AG04449 (cell line): ENCODE measurements at regions of chr14 and their contacts with region 1.

Region 1: DNA sequence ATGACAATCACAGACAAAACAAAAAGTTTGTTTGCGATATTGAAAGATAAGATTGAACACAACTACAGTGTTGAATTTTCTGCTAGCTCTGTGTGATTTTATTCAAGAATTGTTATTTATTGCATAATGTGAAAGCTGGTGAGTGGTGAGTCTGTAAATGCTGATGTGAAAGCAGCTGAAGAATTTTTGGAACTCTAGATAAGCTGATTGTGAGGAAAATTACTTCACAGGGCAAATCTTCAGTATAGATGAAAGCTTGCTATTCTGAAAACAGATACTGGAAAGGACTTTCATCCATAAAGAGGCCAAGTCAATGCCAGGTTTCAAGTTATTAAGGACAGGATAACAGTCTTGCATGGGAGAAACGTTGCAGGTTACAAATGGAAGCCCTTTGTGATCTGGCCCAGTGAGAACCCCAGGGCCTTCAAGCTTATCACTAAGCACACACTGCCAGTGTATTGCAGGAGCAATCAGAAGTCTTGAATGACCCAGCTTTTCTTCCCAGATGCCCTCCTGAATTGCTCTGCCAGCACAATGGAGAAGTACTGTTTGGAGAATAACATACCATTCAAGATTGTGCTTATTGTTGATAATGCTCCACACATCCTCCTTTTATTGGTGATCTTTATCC is 153.7 kb downstream of the PCNX1 start:
- DNase-seq: no peak
- H3K4me3 ChIP-seq: no peak overlapping the region
- CTCF ChIP-seq: no peak

Region 2: GRCh38 chr14:70972107-70972976 is 88.6 kb before region 1 on chr14:
- CTCF ChIA-PET with region 1: no interaction called
- POLR2A ChIA-PET with region 1: no interaction called
- DNase-seq: peak; percentile 62
- H3K4me3 ChIP-seq: no peak overlapping the region
- CTCF ChIP-seq: peak; percentile 71

Region 3: GRCh38 chr14:70995676-70996075 is 65.3 kb before region 1 on chr14:
- CTCF ChIA-PET with region 1: no interaction called
- POLR2A ChIA-PET with region 1: no interaction called
- DNase-seq: no peak
- H3K4me3 ChIP-seq: no peak overlapping the region
- CTCF ChIP-seq: no peak

Region 4: DNA sequence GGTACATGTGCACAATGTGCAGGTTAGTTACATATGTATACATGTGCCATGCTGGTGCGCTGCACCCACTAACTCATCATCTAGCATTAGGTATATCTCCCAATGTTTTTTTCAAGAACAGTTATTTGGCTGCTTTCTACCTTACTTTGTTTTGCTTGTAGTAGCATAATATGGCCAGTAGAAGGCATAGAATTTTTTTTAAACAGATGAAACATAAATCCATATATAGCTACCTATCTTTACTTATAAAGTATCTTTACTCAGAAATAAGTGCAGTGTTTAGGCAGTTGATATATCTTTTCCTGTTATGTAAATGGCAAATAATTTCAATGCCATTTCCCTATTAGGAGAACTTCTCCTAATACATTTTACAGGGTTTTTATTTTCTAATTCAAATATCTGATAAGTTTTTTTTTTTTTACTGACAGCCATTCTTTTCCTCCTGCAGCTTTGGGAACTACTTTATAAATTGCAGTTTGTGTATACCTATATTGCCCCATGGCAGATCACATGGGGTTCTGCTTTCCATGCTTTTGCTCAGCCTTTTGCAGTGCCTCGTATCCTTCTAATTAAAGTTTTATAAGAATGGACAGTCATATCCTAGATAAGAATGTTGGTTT is 10.6 kb before region 1 on chr14:
- CTCF ChIA-PET with region 1: interaction called, 21 read pairs
- POLR2A ChIA-PET with region 1: no interaction called
- DNase-seq: no peak
- H3K4me3 ChIP-seq: no peak overlapping the region
- CTCF ChIP-seq: peak; percentile 39